ENCODE measurements at regions of chr18 and their contacts with region 1.

Region 1: GRCh38 chr18:38174594-38174993 is 609.0 kb upstream of the CELF4 start:
- DNase-seq: no peak
- H3K4me3 ChIP-seq: no peak overlapping the region
- H3K27ac ChIP-seq: no peak overlapping the region
- H3K4me1 ChIP-seq: no peaks in the 10 kb centered on the region
- H3K27me3 ChIP-seq: no peaks in the 10 kb centered on the region
- CTCF ChIP-seq: no peak
- EP300 ChIP-seq: no peak
- POLR2A ChIP-seq: no peak

Region 2: GRCh38 chr18:37712776-37713175 is 461.8 kb before region 1 on chr18:
- in situ Hi-C with region 1: no loop called
- intact Hi-C with region 1: no loop called
- DNase-seq: no peak
- H3K4me3 ChIP-seq: no peak overlapping the region
- H3K27ac ChIP-seq: no peak overlapping the region
- H3K4me1 ChIP-seq: no peaks in the 10 kb centered on the region
- H3K27me3 ChIP-seq: no peaks in the 10 kb centered on the region
- CTCF ChIP-seq: no peak
- EP300 ChIP-seq: no peak
- POLR2A ChIP-seq: no peak

Region 3: GRCh38 chr18:38256366-38256765 is 81.8 kb after region 1 on chr18:
- in situ Hi-C with region 1: loop called in 1 of 4 experiments (anchors 25 kb)
- intact Hi-C with region 1: no loop called
- DNase-seq: no peak
- H3K4me3 ChIP-seq: no peak overlapping the region
- H3K27ac ChIP-seq: no peak overlapping the region
- H3K4me1 ChIP-seq: no peaks in the 10 kb centered on the region
- H3K27me3 ChIP-seq: no peaks in the 10 kb centered on the region
- CTCF ChIP-seq: no peak
- EP300 ChIP-seq: no peak
- POLR2A ChIP-seq: no peak

Region 4: GRCh38 chr18:38718365-38718901 is 543.8 kb after region 1 on chr18:
- in situ Hi-C with region 1: no loop called
- intact Hi-C with region 1: no loop called
- DNase-seq: no peak
- H3K4me3 ChIP-seq: no peak overlapping the region
- H3K27ac ChIP-seq: no peak overlapping the region
- H3K4me1 ChIP-seq: no peaks in the 10 kb centered on the region
- H3K27me3 ChIP-seq: no peaks in the 10 kb centered on the region
- CTCF ChIP-seq: no peak
- EP300 ChIP-seq: no peak
- POLR2A ChIP-seq: no peak

Measured in transverse colon (tissue), 4 donors.